ENCODE measurements at regions of chr15 and their contacts with region 1.

Region 1: GRCh38 chr15:94412979-94413746 is 181.8 kb downstream of the MCTP2 start:
- DNase-seq: no peak
- ATAC-seq: no peak
- H3K4me3 Mint-ChIP-seq: no peak overlapping the region
- H3K27ac Mint-ChIP-seq: no peak overlapping the region
- H3K4me1 Mint-ChIP-seq: no peaks in the 10 kb centered on the region
- H3K27me3 Mint-ChIP-seq: no peaks in the 10 kb centered on the region

Region 2: GRCh38 chr15:94576889-94577533 is 163.8 kb after region 1 on chr15:
- CTCF ChIA-PET with region 1: interaction called, 3 read pairs
- POLR2A ChIA-PET with region 1: no interaction called
- intact Hi-C with region 1: loop called in 1 of 2 experiments (anchors 5 kb)
- DNase-seq: peak; percentile 62
- ATAC-seq: peak; percentile 72
- H3K4me3 Mint-ChIP-seq: no peak overlapping the region
- H3K27ac Mint-ChIP-seq: no peak overlapping the region
- H3K4me1 Mint-ChIP-seq: no peaks in the 10 kb centered on the region
- H3K27me3 Mint-ChIP-seq: peaks cover 48% of the 10 kb centered on the region

Region 3: DNA sequence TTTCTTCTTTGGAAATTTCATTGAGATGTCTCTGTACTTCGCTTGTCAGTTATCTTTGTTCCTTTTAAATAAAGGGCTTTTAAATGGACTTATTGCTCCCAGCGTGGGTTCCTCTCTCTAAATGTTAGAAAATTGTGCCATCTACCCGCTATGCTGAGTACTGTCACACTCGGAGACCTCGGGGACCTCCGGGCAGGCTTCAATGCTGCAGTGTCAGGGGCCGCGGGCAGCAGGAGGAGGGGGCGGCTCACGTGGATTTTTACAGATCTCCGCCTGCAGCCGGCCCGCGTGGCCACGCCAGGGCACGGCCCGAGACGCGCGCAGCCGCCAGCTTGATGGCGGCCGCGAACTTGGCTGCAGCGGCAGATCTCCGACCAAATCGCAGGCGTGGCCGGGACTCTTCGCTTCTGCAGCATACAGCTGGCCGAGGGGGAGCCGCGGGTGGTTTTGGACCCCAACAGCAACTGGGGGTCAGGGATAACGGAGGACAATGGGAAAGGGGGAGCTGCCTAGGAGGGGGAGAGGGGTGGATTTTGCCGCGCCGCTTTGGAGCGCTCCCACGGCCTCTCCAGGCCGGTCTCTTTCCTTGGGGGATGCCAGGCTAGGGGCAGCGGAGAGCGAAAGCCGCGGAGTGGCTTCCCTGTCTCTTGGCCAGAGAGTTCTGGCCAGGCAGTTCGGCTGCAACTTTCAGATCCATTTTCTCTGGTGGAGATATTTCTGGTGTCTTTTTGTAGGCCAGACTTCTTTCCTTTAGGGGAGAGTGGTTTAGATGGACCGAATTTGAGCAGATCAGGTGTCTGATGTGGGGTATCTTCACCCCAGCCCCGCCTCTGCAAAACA is 1932.6 kb after region 1 on chr15:
- CTCF ChIA-PET with region 1: no interaction called
- POLR2A ChIA-PET with region 1: no interaction called
- intact Hi-C with region 1: loop called in 1 of 2 experiments (anchors 5 kb)
- DNase-seq: no peak
- ATAC-seq: no peak
- H3K4me3 Mint-ChIP-seq: no peak overlapping the region
- H3K27ac Mint-ChIP-seq: no peak overlapping the region
- H3K4me1 Mint-ChIP-seq: peaks cover 3% of the 10 kb centered on the region
- H3K27me3 Mint-ChIP-seq: peaks cover 86% of the 10 kb centered on the region

Measured in activated CD4-positive, alpha-beta T cell treated with anti-CD3 and anti-CD28 coated beads for 36 hours (primary cell).